PC-3 (cell line): ENCODE measurements at regions of chr2 and their contacts with region 1.

Region 1: GRCh38 chr2:68467077-68467960 is at the starts of genes APLF and FBXO48:
- DNase-seq: peak; percentile 99
- ATAC-seq: peak; percentile 90
- H3K4me3 ChIP-seq: peak within 1 kb of the TSS; percentile 86
- H3K27ac ChIP-seq: peak within 1 kb of the TSS; percentile 49
- H3K4me1 ChIP-seq: peaks cover 35% of the 10 kb centered on the region
- H3K27me3 ChIP-seq: no peaks in the 10 kb centered on the region
- CTCF ChIP-seq: no peak
- total RNA-seq, gene APLF: 0.69 and 2.4 TPM in 2 replicates
- total RNA-seq, gene FBXO48: 0.52 and 0.91 TPM in 2 replicates

Region 2: GRCh38 chr2:68487773-68488355 is 20.5 kb after region 1 on chr2:
- CTCF ChIA-PET with region 1: interaction called, 8 read pairs
- POLR2A ChIA-PET with region 1: interaction called, 3 read pairs
- intact Hi-C with region 1: loop called (anchors 2 kb)
- DNase-seq: peak; percentile 65
- ATAC-seq: peak; percentile 64
- H3K4me3 ChIP-seq: no peak overlapping the region
- H3K27ac ChIP-seq: no peak overlapping the region
- H3K4me1 ChIP-seq: no peaks in the 10 kb centered on the region
- H3K27me3 ChIP-seq: no peaks in the 10 kb centered on the region
- CTCF ChIP-seq: peak; percentile 76

Region 3: GRCh38 chr2:68548396-68548795 is 81.1 kb after region 1 on chr2:
- CTCF ChIA-PET with region 1: no interaction called
- POLR2A ChIA-PET with region 1: no interaction called
- intact Hi-C with region 1: no loop called
- DNase-seq: peak; percentile 54
- ATAC-seq: peak; percentile 70
- H3K4me3 ChIP-seq: no peak overlapping the region
- H3K27ac ChIP-seq: no peak overlapping the region
- H3K4me1 ChIP-seq: peaks cover 11% of the 10 kb centered on the region; the same call in 1 of the 2 replicates
- H3K27me3 ChIP-seq: no peaks in the 10 kb centered on the region
- CTCF ChIP-seq: no peak

Region 4: GRCh38 chr2:68646302-68646701 is 179.0 kb after region 1 on chr2:
- CTCF ChIA-PET with region 1: interaction called, 3 read pairs
- POLR2A ChIA-PET with region 1: no interaction called
- intact Hi-C with region 1: loop called (anchors 2 kb)
- DNase-seq: peak; percentile 46
- ATAC-seq: peak; percentile 19; the same call in 1 of the 2 replicates
- H3K4me3 ChIP-seq: no peak overlapping the region
- H3K27ac ChIP-seq: no peak overlapping the region
- H3K4me1 ChIP-seq: no peaks in the 10 kb centered on the region
- H3K27me3 ChIP-seq: peaks cover 34% of the 10 kb centered on the region
- CTCF ChIP-seq: peak; percentile 61

Region 5: DNA sequence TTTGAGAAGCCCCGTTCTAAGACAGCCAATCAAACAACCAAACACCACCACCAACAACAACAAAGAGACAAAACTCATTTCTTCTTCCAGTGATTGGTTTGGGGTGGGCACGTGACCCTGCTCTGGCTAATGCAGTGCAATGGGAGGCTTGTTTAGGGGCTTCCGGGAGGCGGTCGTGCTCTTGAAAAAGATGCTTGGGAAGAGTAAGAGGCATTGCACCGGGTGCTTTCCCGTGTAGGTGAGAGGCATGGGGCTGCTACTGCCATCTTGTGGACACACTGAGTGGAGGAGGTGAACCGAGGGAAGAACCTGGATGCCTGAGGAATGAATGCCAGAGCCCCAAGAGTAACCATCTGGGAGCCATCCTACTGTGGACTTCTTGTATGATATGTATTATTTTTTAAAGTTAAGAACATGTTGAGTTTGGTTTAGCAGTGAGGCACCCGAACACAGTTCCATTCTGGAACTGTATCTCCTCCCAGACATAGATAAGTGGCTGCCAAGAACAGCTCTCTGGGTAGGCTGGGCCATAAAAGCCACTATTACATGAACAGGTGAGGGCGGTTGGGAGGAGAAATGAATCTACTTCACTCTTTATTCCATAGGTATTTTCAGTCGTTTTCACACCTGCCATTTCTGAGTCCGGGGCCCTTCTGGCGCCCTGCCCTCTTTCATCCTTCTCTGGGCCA is 248.2 kb after region 1 on chr2:
- CTCF ChIA-PET with region 1: interaction called, 11 read pairs
- POLR2A ChIA-PET with region 1: no interaction called
- intact Hi-C with region 1: loop called (anchors 1 kb)
- DNase-seq: peak; percentile 86
- ATAC-seq: peak; percentile 94
- H3K4me3 ChIP-seq: no peak overlapping the region
- H3K27ac ChIP-seq: no peak overlapping the region
- H3K4me1 ChIP-seq: 0 out of 2 replicates have a peak, but pooled peaks cover 5% of the 10 kb centered on the region
- H3K27me3 ChIP-seq: no peaks in the 10 kb centered on the region
- CTCF ChIP-seq: peak; percentile 85

Region 6: DNA sequence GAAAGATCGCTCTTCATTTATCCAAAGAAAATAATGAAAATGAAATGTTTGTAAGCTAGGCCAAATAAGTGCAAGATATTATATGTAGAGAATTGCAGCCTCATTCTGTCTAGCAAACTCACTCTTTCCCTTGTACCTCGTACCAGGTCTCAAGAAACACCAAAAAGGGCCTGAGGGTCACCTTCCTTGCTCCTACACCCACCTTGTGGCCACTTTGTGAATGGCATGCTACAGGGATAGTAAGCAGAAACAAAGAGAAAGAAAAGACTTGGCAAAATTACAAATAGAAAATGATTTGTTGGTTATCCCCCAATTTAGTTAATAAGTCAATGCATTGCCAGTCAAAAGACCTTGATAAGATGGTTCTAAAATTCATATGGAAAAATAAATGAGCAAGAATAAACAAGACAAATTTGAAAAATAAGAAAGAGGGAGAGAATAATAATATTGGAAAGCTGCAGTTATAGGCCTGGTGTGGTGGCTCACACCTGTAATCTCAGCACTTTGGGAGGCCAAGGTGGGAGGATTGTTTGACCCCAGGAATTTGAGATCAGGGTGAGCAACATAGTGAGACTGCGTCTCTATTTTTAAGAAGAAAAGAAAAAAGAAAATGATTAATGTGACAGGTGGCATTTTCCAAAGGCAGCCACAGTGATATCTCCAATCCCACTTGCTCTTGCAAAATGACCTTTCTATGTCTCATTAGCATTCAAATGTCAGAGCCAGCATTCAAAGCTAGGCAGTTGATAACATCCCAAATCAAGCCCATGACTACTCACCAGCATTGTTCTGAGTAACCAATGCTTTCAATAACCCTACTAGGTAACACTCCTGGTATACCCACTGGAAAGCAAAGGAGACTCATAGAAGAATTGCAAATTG is 442.7 kb after region 1 on chr2:
- CTCF ChIA-PET with region 1: interaction called, 3 read pairs
- POLR2A ChIA-PET with region 1: no interaction called
- intact Hi-C with region 1: loop called (anchors 5 kb)
- DNase-seq: peak; percentile 88
- ATAC-seq: no peak
- H3K4me3 ChIP-seq: no peak overlapping the region
- H3K27ac ChIP-seq: no peak overlapping the region
- H3K4me1 ChIP-seq: peaks cover 29% of the 10 kb centered on the region
- H3K27me3 ChIP-seq: no peaks in the 10 kb centered on the region
- CTCF ChIP-seq: peak; percentile 89